Uterus (tissue), 4 donors: ENCODE measurements at regions of chr22 and their contacts with region 1.

Region 1: DNA sequence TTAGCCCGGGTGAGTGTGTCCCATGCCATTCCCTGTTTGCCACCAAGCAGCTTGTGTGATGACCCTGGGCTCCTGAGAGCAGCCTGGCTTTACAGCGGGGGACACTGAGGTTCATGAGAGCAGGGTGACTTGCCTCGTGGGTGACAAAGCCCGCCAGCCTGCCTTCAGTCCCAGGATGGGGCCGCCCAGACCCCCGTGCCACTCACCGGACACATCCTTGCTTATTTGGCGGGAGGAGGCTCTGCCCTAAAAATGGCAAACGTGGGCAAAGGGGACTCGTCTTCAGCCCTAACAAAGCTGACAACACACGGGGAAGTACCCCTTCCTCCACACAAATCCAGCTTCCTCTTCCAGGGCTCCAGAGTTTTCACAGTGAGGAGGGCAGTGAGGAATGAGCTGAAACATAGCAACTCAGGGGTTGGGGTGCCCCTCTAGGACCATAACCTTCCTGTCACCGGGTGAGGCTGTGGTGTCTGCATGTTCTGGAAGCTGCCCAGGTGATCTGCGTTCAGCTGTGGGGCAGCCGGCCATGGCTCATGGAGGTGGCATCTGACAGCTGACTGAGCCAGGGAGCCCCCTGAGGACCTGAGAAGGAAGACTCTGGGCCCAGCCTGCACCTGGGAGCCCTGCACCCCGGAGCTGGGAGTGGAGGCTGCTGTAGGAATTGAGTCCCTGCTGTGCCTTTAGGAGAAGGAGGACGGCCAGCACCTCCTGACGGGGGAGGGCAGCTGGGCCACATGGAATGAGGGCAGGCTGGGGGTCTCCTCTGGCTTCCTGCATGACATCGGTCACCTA is 16.7 kb downstream of the RIBC2 start:
- DNase-seq: peak; percentile 10 to 14
- H3K4me3 ChIP-seq: no peak overlapping the region
- H3K27ac ChIP-seq: no peak overlapping the region
- H3K4me1 ChIP-seq: no peaks in the 10 kb centered on the region
- H3K27me3 ChIP-seq: no peaks in the 10 kb centered on the region
- CTCF ChIP-seq: no peak
- POLR2A ChIP-seq: no peak

Region 2: DNA sequence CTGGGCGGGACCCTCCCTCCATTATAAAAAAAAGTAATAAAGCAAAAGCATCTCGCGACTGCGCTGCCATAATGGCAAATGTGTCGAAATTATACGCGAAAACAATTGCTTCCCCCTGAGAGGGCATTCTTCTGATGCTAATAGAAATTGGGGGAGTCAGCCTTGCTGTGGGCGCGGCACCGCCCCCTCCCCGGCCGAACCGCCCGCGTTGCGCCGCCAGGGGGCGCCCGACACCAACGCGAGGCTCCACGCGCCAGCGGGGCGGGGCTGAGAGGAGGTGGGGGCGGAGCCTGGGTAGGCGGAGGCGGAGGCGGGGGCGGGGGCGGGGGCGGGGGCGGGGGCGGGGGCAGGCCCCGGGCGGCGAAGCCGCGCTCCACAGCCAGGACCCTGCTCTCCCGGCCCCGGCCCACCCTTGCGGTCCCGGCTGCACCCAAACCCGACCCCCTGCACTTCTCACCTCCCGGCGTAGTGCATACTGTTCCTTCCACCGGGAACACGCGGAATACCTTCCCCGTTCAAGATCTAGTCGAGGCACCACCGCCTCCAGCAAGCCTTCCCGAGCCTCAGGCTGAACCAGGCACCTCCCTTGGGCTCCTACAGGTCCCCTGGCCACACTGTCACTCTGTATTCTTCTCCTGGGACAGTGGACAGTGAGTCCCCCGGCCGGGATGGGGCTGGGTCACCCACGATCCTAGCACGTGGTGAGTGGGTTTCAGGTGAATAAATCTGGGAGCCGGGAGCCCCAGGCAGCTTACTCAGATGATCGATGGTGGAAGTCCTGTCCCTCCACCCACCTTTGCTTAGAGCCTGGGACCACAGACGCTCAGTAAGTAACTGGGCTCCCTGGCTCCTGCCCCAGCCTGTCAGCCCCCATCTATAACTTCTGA is 161.0 kb before region 1 on chr22:
- intact Hi-C with region 1: loop called (anchors 5 kb)
- DNase-seq: peak; percentile 83 to 89
- H3K4me3 ChIP-seq: peak overlapping the region; percentile 45
- H3K27ac ChIP-seq: peak overlapping the region; percentile 39 to 40
- H3K4me1 ChIP-seq: no peaks in the 10 kb centered on the region
- H3K27me3 ChIP-seq: no peaks in the 10 kb centered on the region
- CTCF ChIP-seq: peak; percentile 65 to 98 (median 97)
- POLR2A ChIP-seq: no peak

Region 3: DNA sequence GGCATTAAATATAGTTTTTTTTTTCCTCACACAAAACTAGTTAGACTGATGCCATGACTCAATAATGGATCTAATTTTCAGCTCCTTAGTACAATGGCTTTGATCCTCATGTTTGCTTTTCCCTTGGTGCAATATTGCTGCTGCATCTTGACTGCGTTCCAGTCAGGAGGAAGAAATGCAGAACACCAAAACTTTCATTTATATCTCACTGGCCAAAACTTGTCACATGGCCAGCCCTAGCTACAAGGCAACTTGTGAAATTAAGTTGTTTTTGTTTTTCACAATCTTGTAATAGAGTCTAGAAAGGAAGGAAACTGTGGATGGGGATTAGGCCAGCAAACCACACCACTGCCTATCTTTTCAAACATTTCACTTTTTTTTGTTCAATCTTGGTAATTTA is 53.5 kb before region 1 on chr22:
- intact Hi-C with region 1: no loop called
- DNase-seq: peak; percentile 48 to 63
- H3K4me3 ChIP-seq: no peak overlapping the region
- H3K27ac ChIP-seq: no peak overlapping the region
- H3K4me1 ChIP-seq: no peaks in the 10 kb centered on the region
- H3K27me3 ChIP-seq: no peaks in the 10 kb centered on the region
- CTCF ChIP-seq: no peak
- POLR2A ChIP-seq: no peak